ENCODE measurements at regions of chr1 and their contacts with region 1.

Region 1: GRCh38 chr1:44786138-44786840 is 1.7 kb downstream of the BEST4 start:
- DNase-seq: peak; percentile 54
- H3K4me3 ChIP-seq: peak overlapping the region; percentile 21 to 31
- H3K27ac ChIP-seq: peak overlapping the region in 1 of 2 donors; percentile 24
- H3K4me1 ChIP-seq: no peaks in the 10 kb centered on the region
- H3K27me3 ChIP-seq: no peaks in the 10 kb centered on the region
- CTCF ChIP-seq: peak; percentile 91 to 99 (median 96)
- POLR2A ChIP-seq: no peak

Region 2: GRCh38 chr1:44730741-44731512 is 55.4 kb before region 1 on chr1 and contains the start of gene RNU5D-1:
- intact Hi-C with region 1: loop called (anchors 5 kb)
- DNase-seq: peak; percentile 86
- H3K4me3 ChIP-seq: peak within 1 kb of the TSS; percentile 1 to 2
- H3K27ac ChIP-seq: peak within 1 kb of the TSS; percentile 72 to 74
- H3K4me1 ChIP-seq: no peaks in the 10 kb centered on the region
- H3K27me3 ChIP-seq: no peaks in the 10 kb centered on the region
- CTCF ChIP-seq: peak; percentile 73 to 83 (median 75)
- POLR2A ChIP-seq: peak; percentile 65
- total RNA-seq, gene RNU5D-1: not detected